PC-9 (cell line): ENCODE measurements at regions of chr1 and their contacts with region 1.

Region 1: GRCh38 chr1:81800695-81801650 is at the start of gene ADGRL2:
- DNase-seq: peak; percentile 70 to 81
- H3K4me3 ChIP-seq: peak within 1 kb of the TSS; percentile 96
- H3K27ac ChIP-seq: peak within 1 kb of the TSS; percentile 76
- H3K4me1 ChIP-seq: peaks cover 25% of the 10 kb centered on the region
- H3K27me3 ChIP-seq: no peaks in the 10 kb centered on the region
- CTCF ChIP-seq: no peak
- total RNA-seq, gene ADGRL2: 24.0 and 25.3 TPM in 2 replicates

Region 2: GRCh38 chr1:81689531-81689941 is 111.4 kb before region 1 on chr1:
- CTCF ChIA-PET with region 1: no interaction called
- POLR2A ChIA-PET with region 1: no interaction called
- intact Hi-C with region 1: loop called (anchors 2 kb)
- DNase-seq: peak; percentile 75 to 93
- H3K4me3 ChIP-seq: peak overlapping the region; percentile 33
- H3K27ac ChIP-seq: peak overlapping the region; percentile 95
- H3K4me1 ChIP-seq: peaks cover 44% of the 10 kb centered on the region
- H3K27me3 ChIP-seq: no peaks in the 10 kb centered on the region
- CTCF ChIP-seq: no peak

Region 3: GRCh38 chr1:81702903-81703302 is 98.1 kb before region 1 on chr1:
- CTCF ChIA-PET with region 1: no interaction called
- POLR2A ChIA-PET with region 1: interaction called, 9 read pairs
- intact Hi-C with region 1: loop called (anchors 5 kb)
- DNase-seq: peak in 1 of 2 experiments; percentile 98
- H3K4me3 ChIP-seq: peak overlapping the region; percentile 62
- H3K27ac ChIP-seq: peak overlapping the region; percentile 98
- H3K4me1 ChIP-seq: peaks cover 75% of the 10 kb centered on the region
- H3K27me3 ChIP-seq: no peaks in the 10 kb centered on the region
- CTCF ChIP-seq: no peak

Region 4: DNA sequence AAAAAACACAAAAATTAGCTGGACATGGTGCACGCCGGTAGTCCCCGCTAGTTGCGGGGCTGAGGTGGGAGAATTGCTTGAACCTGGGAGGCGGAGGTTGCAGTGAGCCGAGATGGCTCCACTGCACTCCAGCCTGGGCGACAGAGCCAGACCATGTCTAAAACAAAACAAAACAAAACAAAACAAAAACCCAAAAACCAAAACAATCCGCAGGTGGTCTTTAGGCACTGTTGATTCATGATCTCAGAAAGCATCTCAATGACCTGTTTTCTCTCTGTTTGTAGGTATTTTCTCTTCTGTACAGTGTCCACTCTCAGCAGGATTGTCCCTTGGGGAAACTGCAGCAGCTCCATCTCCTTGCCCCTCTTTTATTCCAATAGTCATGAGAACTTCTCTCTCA is 75.2 kb before region 1 on chr1:
- CTCF ChIA-PET with region 1: no interaction called
- POLR2A ChIA-PET with region 1: no interaction called
- intact Hi-C with region 1: no loop called
- DNase-seq: no peak
- H3K4me3 ChIP-seq: no peak overlapping the region
- H3K27ac ChIP-seq: no peak overlapping the region
- H3K4me1 ChIP-seq: peaks cover 10% of the 10 kb centered on the region
- H3K27me3 ChIP-seq: no peaks in the 10 kb centered on the region
- CTCF ChIP-seq: no peak